B cell (primary cell): ENCODE measurements at regions of chr1 and their contacts with region 1.

Region 1: GRCh38 chr1:207797229-207797961 is 45.5 kb downstream of the CD46 start:
- DNase-seq: peak; percentile 75
- ATAC-seq: peak; percentile 80
- H3K4me3 ChIP-seq: no peak overlapping the region
- H3K4me3 Mint-ChIP-seq: no peak overlapping the region
- H3K27ac ChIP-seq: no peak overlapping the region
- H3K27ac Mint-ChIP-seq: no peak overlapping the region
- H3K4me1 ChIP-seq: peaks cover 16 to 22% of the 10 kb centered on the region in 2 donors
- H3K4me1 Mint-ChIP-seq: peaks cover 33% of the 10 kb centered on the region
- H3K27me3 ChIP-seq: no peaks in the 10 kb centered on the region
- H3K27me3 Mint-ChIP-seq: no peaks in the 10 kb centered on the region
- CTCF ChIP-seq: peak; percentile 83

Region 2: GRCh38 chr1:207644852-207645634 is 152.4 kb before region 1 on chr1 and contains the start of gene CR1L:
- CTCF ChIA-PET with region 1: no interaction called
- POLR2A ChIA-PET with region 1: no interaction called
- intact Hi-C with region 1: no loop called
- DNase-seq: peak; percentile 81
- ATAC-seq: peak; percentile 99
- H3K4me3 ChIP-seq: peak within 1 kb of the TSS; percentile 30 to 73 (median 56)
- H3K4me3 Mint-ChIP-seq: peak within 1 kb of the TSS; percentile 84
- H3K27ac ChIP-seq: no peak within 1 kb of the TSS
- H3K27ac Mint-ChIP-seq: no peak within 1 kb of the TSS
- H3K4me1 ChIP-seq: peaks cover 7 to 12% of the 10 kb centered on the region in 2 donors
- H3K4me1 Mint-ChIP-seq: peaks cover 12% of the 10 kb centered on the region
- H3K27me3 ChIP-seq: no peaks in the 10 kb centered on the region
- H3K27me3 Mint-ChIP-seq: no peaks in the 10 kb centered on the region
- CTCF ChIP-seq: no peak
- total RNA-seq, gene CR1L: 0.59 TPM in 1 of 2 replicates, not detected in the other

Region 3: DNA sequence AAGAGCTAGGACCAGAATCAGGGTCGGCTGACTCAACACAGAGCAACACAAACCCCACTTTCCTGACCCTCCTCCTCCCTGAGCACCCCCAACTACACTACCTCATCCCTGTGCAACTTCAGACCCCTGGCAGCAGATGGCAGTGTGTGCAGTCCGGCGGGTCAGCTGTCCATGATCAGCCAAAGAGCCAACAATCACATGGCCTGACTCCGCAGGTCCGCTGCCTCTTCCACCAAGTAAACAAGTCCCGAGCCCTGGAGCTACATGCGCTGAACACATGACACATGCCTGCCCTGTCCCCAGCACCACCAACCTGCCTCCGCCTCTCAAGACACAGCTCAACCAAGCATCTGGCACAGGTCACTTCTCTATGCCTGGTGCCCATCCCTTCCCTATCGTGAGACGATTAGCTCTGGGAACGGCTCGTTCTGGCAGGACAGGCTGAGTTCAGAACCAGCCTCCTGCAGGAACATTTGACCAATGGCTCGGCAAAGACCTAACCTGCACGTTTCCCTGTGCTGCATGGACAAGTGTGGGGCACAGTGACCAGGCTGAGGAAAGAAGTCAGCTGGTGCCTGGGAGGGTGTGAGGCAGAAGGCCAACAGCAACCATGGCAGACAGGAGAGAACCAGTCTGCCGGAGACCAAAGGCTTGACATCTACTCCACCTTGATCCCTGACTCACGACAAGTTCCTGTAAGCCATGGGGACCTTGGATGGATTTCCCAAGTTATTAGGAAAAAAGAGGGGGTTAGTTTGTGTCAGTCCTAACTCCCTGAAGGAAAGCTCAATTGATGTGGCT is 14.7 kb after region 1 on chr1:
- CTCF ChIA-PET with region 1: interaction called, 27 read pairs
- POLR2A ChIA-PET with region 1: no interaction called
- intact Hi-C with region 1: no loop called
- DNase-seq: peak; percentile 31
- ATAC-seq: no peak
- H3K4me3 ChIP-seq: no peak overlapping the region
- H3K4me3 Mint-ChIP-seq: no peak overlapping the region
- H3K27ac ChIP-seq: peak overlapping the region in 1 of 2 donors; percentile 25
- H3K27ac Mint-ChIP-seq: peak overlapping the region; percentile 72
- H3K4me1 ChIP-seq: peaks cover 34 to 46% of the 10 kb centered on the region in 2 donors
- H3K4me1 Mint-ChIP-seq: peaks cover 88% of the 10 kb centered on the region
- H3K27me3 ChIP-seq: no peaks in the 10 kb centered on the region
- H3K27me3 Mint-ChIP-seq: no peaks in the 10 kb centered on the region
- CTCF ChIP-seq: no peak

Region 4: GRCh38 chr1:207822602-207823451 is 25.4 kb after region 1 on chr1:
- CTCF ChIA-PET with region 1: interaction called, 54 read pairs
- POLR2A ChIA-PET with region 1: interaction called, 9 read pairs
- intact Hi-C with region 1: loop called (anchors 1 kb)
- DNase-seq: peak; percentile 94
- ATAC-seq: peak; percentile 66
- H3K4me3 ChIP-seq: peak overlapping the region; percentile 42 to 100 (median 96)
- H3K4me3 Mint-ChIP-seq: peak overlapping the region; percentile 99
- H3K27ac ChIP-seq: peak overlapping the region; percentile 93 to 96
- H3K27ac Mint-ChIP-seq: peak overlapping the region; percentile 99
- H3K4me1 ChIP-seq: peaks cover 68 to 87% of the 10 kb centered on the region in 2 donors
- H3K4me1 Mint-ChIP-seq: peaks cover 90% of the 10 kb centered on the region
- H3K27me3 ChIP-seq: no peaks in the 10 kb centered on the region
- H3K27me3 Mint-ChIP-seq: peaks cover 4% of the 10 kb centered on the region
- CTCF ChIP-seq: no peak

Region 5: DNA sequence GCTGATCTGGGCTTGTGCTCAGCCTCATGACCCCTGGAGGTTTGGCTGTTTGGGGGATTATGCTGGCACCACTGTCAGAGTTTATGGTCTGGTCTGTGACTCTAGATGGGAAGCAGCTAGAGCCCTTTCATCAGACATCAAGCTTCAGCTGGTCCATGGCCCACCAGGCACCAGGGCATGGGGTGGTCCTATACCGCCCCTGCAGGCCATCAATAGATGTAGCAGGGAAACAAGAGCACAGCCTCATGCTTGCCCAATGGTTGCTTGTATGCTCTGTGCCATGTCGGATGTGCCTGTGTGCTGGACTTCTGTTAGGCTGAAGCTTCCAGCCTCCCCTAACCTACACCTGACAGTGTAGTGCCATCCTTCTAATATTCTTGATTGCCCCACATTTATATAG is 184.6 kb after region 1 on chr1:
- CTCF ChIA-PET with region 1: no interaction called
- POLR2A ChIA-PET with region 1: no interaction called
- intact Hi-C with region 1: no loop called
- DNase-seq: no peak
- ATAC-seq: peak; percentile 39
- H3K4me3 ChIP-seq: no peak overlapping the region
- H3K4me3 Mint-ChIP-seq: no peak overlapping the region
- H3K27ac ChIP-seq: no peak overlapping the region
- H3K27ac Mint-ChIP-seq: no peak overlapping the region
- H3K4me1 ChIP-seq: no peaks in the 10 kb centered on the region
- H3K4me1 Mint-ChIP-seq: no peaks in the 10 kb centered on the region
- H3K27me3 ChIP-seq: peaks cover 0 to 5% (median 0%) of the 10 kb centered on the region in 4 experiments
- H3K27me3 Mint-ChIP-seq: peaks cover 17% of the 10 kb centered on the region
- CTCF ChIP-seq: peak; percentile 28